ENCODE measurements at regions of chr1 and their contacts with region 1.

Region 1: GRCh38 chr1:226687426-226687825 is 51.7 kb downstream of the ITPKB start:
- DNase-seq: peak; percentile 26 to 63 (median 47)
- H3K4me3 ChIP-seq: no peak overlapping the region
- H3K4me3 Mint-ChIP-seq: peak overlapping the region; percentile 14 to 61 (median 24)
- H3K27ac ChIP-seq: no peak overlapping the region
- H3K27ac Mint-ChIP-seq: peak overlapping the region; percentile 79 to 99 (median 96)
- H3K4me1 ChIP-seq: peaks cover 100% of the 10 kb centered on the region
- H3K4me1 Mint-ChIP-seq: peaks cover 97 to 100% (median 100%) of the 10 kb centered on the region in 3 donors
- H3K27me3 ChIP-seq: no peaks in the 10 kb centered on the region
- H3K27me3 Mint-ChIP-seq: peaks cover 0 to 2% of the 10 kb centered on the region in 2 donors

Region 2: GRCh38 chr1:226626577-226626956 is 60.9 kb before region 1 on chr1:
- CTCF ChIA-PET with region 1: interaction called, 49 read pairs
- POLR2A ChIA-PET with region 1: no interaction called
- DNase-seq: peak; percentile 65 to 84 (median 67)
- H3K4me3 ChIP-seq: peak overlapping the region; percentile 45
- H3K4me3 Mint-ChIP-seq: peak overlapping the region in 6 of 7 donors; percentile 63 to 80 (median 74)
- H3K27ac ChIP-seq: no peak overlapping the region
- H3K27ac Mint-ChIP-seq: peak overlapping the region in 6 of 8 donors; percentile 11 to 72 (median 16)
- H3K4me1 ChIP-seq: peaks cover 10% of the 10 kb centered on the region
- H3K4me1 Mint-ChIP-seq: peaks cover 12 to 20% (median 19%) of the 10 kb centered on the region in 3 donors
- H3K27me3 ChIP-seq: no peaks in the 10 kb centered on the region
- H3K27me3 Mint-ChIP-seq: peaks cover 0 to 7% of the 10 kb centered on the region in 2 donors

Region 3: DNA sequence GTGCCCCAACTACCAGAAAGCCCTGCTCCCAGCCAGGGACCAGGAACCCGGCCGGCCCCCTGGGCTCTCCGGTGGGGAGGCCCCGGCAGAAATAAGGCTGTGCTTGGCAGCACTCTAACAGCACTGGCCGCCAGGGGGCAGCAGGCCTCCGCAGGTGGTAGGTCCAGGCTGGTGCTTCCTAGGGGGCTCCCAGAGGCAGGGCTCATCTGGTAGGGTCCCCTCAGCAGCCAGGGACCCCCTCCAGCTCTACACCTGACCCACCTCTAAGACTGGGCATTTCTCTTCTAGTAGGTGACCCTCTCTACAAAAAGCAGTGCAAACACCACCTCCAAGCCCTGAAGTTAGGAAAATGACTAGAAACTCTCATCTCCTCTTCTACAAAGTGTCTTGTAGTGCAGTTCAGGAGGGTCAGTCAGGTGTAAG is 53.2 kb before region 1 on chr1:
- CTCF ChIA-PET with region 1: interaction called, 49 read pairs
- POLR2A ChIA-PET with region 1: no interaction called
- DNase-seq: peak; percentile 73 to 89 (median 79)
- H3K4me3 ChIP-seq: no peak overlapping the region
- H3K4me3 Mint-ChIP-seq: peak overlapping the region in 4 of 7 donors; percentile 0 to 60 (median 32)
- H3K27ac ChIP-seq: no peak overlapping the region
- H3K27ac Mint-ChIP-seq: peak overlapping the region; percentile 3 to 90 (median 75)
- H3K4me1 ChIP-seq: peaks cover 48% of the 10 kb centered on the region
- H3K4me1 Mint-ChIP-seq: peaks cover 42 to 61% (median 50%) of the 10 kb centered on the region in 3 donors
- H3K27me3 ChIP-seq: no peaks in the 10 kb centered on the region
- H3K27me3 Mint-ChIP-seq: no peaks in the 10 kb centered on the region

Region 4: GRCh38 chr1:226653311-226653921 is 34.0 kb before region 1 on chr1:
- CTCF ChIA-PET with region 1: interaction called, 15 read pairs
- POLR2A ChIA-PET with region 1: no interaction called
- DNase-seq: peak; percentile 68 to 87 (median 83)
- H3K4me3 ChIP-seq: peak overlapping the region; percentile 44
- H3K4me3 Mint-ChIP-seq: peak overlapping the region; percentile 75 to 90 (median 82)
- H3K27ac ChIP-seq: peak overlapping the region; percentile 74
- H3K27ac Mint-ChIP-seq: no peak overlapping the region
- H3K4me1 ChIP-seq: peaks cover 14% of the 10 kb centered on the region
- H3K4me1 Mint-ChIP-seq: peaks cover 0 to 48% (median 24%) of the 10 kb centered on the region in 3 donors
- H3K27me3 ChIP-seq: no peaks in the 10 kb centered on the region
- H3K27me3 Mint-ChIP-seq: peaks cover 0 to 1% of the 10 kb centered on the region in 2 donors

Region 5: DNA sequence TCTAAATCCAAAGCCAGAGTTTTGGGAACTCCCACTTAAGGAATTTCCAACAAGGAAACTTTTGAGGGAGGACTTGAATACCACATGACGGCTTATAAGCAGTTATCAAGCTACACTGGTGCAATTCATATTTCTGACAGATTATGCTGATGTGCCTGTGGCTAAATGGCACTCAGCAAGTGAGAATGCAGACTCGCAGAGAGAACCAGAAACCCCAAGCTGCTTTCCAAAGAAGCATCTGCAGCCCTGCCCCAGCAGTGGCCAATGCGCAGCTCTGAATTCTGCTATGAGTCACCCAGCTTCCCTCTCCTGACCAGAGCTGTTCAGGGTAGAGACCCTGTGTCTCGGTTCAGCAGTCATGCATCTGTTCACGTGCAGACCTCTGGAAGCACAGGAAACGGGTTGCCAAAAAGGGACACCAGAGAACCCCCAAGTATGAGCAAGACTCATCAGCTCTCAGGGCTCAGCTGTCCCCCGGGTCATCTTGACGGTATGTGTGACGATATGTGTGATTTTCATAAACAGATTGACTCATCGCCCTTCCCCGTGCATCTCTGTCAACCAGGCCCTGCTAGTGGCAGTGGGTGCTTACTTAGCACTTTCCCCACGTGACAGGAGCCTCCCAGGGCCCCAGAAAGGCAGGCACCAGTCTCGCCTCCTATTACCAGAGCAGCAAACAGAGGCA is 24.6 kb before region 1 on chr1:
- CTCF ChIA-PET with region 1: interaction called, 11 read pairs
- POLR2A ChIA-PET with region 1: interaction called, 5 read pairs
- DNase-seq: peak; percentile 80 to 96 (median 87)
- H3K4me3 ChIP-seq: peak overlapping the region; percentile 20
- H3K4me3 Mint-ChIP-seq: peak overlapping the region; percentile 60 to 79 (median 70)
- H3K27ac ChIP-seq: peak overlapping the region; percentile 66
- H3K27ac Mint-ChIP-seq: peak overlapping the region in 7 of 8 donors; percentile 89 to 99 (median 98)
- H3K4me1 ChIP-seq: peaks cover 48% of the 10 kb centered on the region
- H3K4me1 Mint-ChIP-seq: peaks cover 0 to 93% (median 90%) of the 10 kb centered on the region in 3 donors
- H3K27me3 ChIP-seq: no peaks in the 10 kb centered on the region
- H3K27me3 Mint-ChIP-seq: no peaks in the 10 kb centered on the region

Region 6: DNA sequence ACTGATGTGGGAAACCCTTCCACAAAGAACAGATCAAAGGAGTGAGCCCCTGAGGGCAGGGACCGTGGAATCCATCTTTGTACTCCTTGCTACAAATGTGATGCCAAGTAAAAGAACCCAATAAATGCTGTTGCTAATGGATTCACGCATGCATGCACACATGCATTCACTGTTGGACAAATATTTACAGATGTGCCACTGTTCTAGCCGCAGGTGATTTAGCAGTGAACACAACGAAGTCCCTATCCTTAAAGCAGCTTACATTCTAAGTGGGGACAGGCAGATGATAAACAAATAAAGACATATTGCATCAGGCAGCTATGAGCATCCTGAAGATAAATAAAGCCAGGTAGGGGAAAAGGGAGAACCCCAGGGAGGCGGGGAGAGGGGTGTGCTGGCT is 16.1 kb before region 1 on chr1:
- CTCF ChIA-PET with region 1: interaction called, 16 read pairs
- POLR2A ChIA-PET with region 1: no interaction called
- DNase-seq: no peak
- H3K4me3 ChIP-seq: no peak overlapping the region
- H3K4me3 Mint-ChIP-seq: peak overlapping the region in 3 of 7 donors; percentile 8 to 46 (median 34)
- H3K27ac ChIP-seq: no peak overlapping the region
- H3K27ac Mint-ChIP-seq: peak overlapping the region; percentile 84 to 99 (median 96)
- H3K4me1 ChIP-seq: peaks cover 90% of the 10 kb centered on the region
- H3K4me1 Mint-ChIP-seq: peaks cover 67 to 94% (median 89%) of the 10 kb centered on the region in 3 donors
- H3K27me3 ChIP-seq: no peaks in the 10 kb centered on the region
- H3K27me3 Mint-ChIP-seq: peaks cover 0 to 3% of the 10 kb centered on the region in 2 donors

Measured in CD8-positive, alpha-beta memory T cell (primary cell).